K562 (cell line): ENCODE measurements at regions of chr12 and their contacts with region 1.

Region 1: DNA sequence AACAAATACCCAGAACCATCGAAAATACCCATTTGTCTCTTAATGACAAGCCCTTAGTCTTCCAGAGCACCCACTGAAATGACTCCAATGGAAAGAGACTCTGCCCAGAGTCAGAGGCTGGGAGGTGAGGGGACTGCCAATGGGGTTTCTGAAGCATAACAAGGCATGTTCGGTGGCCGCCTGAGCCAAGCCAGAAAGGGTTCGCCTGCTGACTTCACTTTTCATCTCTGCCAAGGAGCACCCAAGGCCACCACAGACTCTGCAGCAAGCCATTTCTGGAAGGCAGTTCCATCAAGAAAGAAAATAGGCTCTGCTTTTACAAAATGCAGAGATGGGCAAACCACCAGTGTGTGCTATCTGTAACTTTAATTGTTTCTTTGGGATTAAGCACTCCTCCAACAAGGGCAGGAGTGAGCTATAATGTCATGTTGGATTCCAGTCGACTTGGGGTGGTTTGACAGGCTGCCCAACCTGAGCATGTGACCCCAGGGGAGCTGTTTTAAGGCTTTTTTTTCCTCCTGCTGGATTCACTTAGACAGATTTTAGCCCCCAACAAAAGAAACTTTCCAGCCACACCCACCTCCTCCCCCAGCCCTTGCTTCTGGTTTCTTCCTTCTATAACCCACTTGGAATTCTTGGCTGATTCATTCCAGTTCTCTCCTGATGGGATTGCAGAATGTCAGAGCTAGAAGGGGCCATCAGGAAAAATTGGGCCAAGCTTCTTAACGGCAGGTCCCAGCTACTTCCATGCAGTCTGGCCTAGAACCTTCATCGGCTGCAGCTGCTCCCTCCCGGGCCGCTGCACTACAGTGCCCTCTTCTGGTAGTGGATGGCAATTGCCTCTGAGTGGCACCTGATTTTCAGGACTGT is 24.1 kb downstream of the CKAP4 start:
- DNase-seq: peak; percentile 73 to 84 (median 83)
- ATAC-seq: peak; percentile 96
- H3K4me3 ChIP-seq: no peak overlapping the region
- H3K27ac ChIP-seq: no peak overlapping the region
- H3K4me1 ChIP-seq: no peaks in the 10 kb centered on the region
- H3K27me3 ChIP-seq: peaks cover 5 to 8% of the 10 kb centered on the region in 2 experiments; a peak in 3 of 5 replicates
- CTCF ChIP-seq: peak; percentile 84 to 93 (median 85)
- EP300 ChIP-seq: no peak
- POLR2A ChIP-seq: no peak
- RAD21 ChIP-seq: peak; percentile 56 to 79

Region 2: GRCh38 chr12:105409801-105410471 is 813.8 kb before region 1 on chr12:
- CTCF ChIA-PET with region 1: no interaction called
- POLR2A ChIA-PET with region 1: no interaction called
- in situ Hi-C with region 1: loop called (anchors 10 kb)
- intact Hi-C with region 1: no loop called
- DNase-seq: no peak
- ATAC-seq: no peak
- H3K4me3 ChIP-seq: no peak overlapping the region
- H3K27ac ChIP-seq: no peak overlapping the region
- H3K4me1 ChIP-seq: no peaks in the 10 kb centered on the region
- H3K27me3 ChIP-seq: peaks cover 2 to 7% of the 10 kb centered on the region in 2 experiments; a peak in 1 of 5 replicates
- CTCF ChIP-seq: no peak
- EP300 ChIP-seq: no peak
- POLR2A ChIP-seq: no peak
- RAD21 ChIP-seq: no peak

Region 3: DNA sequence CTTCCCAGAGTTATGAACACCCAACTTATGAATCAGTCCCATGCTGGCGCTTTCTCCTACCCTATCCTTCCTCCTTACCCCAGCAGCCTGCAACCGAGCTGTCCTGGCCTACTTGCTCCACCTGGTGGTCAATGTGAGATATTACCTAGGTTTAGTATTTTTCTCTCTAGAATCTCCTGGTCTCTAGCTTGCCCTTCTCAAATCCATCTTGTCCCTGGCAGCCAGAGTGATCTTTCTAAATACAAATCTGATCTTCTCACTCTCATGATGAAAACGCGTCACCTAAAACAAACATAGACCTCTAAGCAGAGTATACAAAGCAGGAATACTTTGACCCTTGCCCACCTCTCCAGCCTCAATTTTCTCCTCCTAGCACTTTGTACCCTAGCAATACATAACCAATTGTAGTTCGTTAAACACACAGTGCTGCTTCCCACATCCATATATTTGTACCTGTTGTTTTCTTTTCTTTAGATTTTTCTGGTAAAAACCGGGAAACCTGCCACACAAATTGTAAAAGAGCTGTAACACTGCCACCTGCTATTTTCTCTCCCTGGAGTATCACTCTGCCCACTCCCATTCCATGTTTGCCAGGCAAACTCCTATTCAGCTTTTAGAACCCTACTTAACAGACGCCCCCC is 58.9 kb after region 1 on chr12:
- CTCF ChIA-PET with region 1: interaction called, 14 read pairs
- POLR2A ChIA-PET with region 1: interaction called, 7 read pairs
- in situ Hi-C with region 1: loop called (anchors 5 kb)
- intact Hi-C with region 1: loop called (anchors 1 kb)
- DNase-seq: peak; percentile 67 to 72 (median 71)
- ATAC-seq: peak; percentile 94
- H3K4me3 ChIP-seq: no peak overlapping the region
- H3K27ac ChIP-seq: no peak overlapping the region
- H3K4me1 ChIP-seq: 0 out of 5 replicates have a peak, but pooled peaks cover 0 to 3% of the 10 kb centered on the region in 2 experiments
- H3K27me3 ChIP-seq: peaks cover 0 to 18% of the 10 kb centered on the region in 2 experiments
- CTCF ChIP-seq: peak; percentile 77 to 82 (median 78)
- EP300 ChIP-seq: no peak
- POLR2A ChIP-seq: no peak
- RAD21 ChIP-seq: peak; percentile 71 to 79

Region 4: GRCh38 chr12:106357549-106358395 is 134.1 kb after region 1 on chr12 and contains the start of gene POLR3B:
- CTCF ChIA-PET with region 1: no interaction called
- POLR2A ChIA-PET with region 1: interaction called, 3 read pairs
- in situ Hi-C with region 1: loop called (anchors 5 kb)
- intact Hi-C with region 1: no loop called
- DNase-seq: peak; percentile 95 to 98 (median 96)
- ATAC-seq: peak; percentile 86
- H3K4me3 ChIP-seq: peak within 1 kb of the TSS; percentile 72
- H3K27ac ChIP-seq: peak within 1 kb of the TSS; percentile 94
- H3K4me1 ChIP-seq: peaks cover 14 to 15% of the 10 kb centered on the region in 2 experiments; a peak in 4 of 5 replicates
- H3K27me3 ChIP-seq: no peaks in the 10 kb centered on the region
- CTCF ChIP-seq: peak; percentile 79 to 92 (median 90)
- EP300 ChIP-seq: peak; percentile 30; the same call in 1 of the 2 replicates
- POLR2A ChIP-seq: peak; percentile 94
- RAD21 ChIP-seq: peak; percentile 81 to 82
- polyA plus RNA-seq, gene POLR3B: 7.6 to 16.5 TPM

Region 5: DNA sequence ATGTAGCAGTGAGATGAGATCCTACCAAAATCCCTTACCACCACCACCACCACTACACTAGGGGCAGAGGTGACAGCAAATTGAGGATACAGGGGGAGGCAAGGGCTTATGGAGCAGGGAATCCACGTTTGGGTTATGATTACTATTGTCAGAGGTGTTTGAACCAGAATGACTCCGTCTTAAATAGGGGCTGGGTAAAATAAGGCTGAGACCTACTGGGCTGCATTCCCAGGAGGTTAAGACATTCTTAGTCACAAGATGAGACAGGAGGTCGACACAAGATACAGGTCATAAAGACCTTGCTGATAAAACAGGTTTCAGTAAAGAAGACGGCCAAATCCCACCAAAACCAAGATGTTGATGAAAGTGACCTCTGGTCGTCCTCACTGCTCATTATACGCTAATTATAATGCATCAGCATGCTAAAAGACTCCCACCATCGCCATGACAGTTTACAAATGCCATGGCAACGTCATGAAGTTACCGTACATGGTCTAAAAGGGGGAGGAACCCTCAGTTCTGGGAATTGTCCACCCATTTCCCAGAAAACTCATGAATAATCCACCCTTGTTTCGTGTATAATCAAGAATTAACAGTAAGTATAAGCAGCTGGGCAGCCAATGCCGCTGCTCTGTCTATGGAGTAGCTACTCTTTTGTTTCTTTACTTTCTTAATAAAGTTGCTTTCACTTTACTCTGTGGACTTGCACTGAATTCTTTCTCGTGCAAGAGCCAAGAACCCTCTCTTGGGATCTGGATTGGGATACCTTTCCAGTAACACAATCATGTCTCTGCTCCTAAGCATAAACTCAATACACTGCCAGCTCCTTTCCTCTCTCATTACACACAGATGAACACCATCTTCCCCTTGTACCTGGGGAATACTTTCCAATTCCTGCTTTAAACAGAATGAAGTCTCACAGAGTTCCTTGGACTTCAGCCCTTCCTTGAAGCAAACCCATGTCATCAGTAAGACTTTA is 886.3 kb after region 1 on chr12:
- CTCF ChIA-PET with region 1: no interaction called
- POLR2A ChIA-PET with region 1: no interaction called
- in situ Hi-C with region 1: no loop called
- intact Hi-C with region 1: loop called (anchors 10 kb)
- DNase-seq: peak in 3 of 4 experiments; percentile 14 to 83 (median 36)
- ATAC-seq: peak; percentile 79
- H3K4me3 ChIP-seq: peak overlapping the region; percentile 2; the same call in 1 of the 2 replicates
- H3K27ac ChIP-seq: 0 out of 3 replicates have a peak overlapping the region, but pooled peaks have one; percentile 15
- H3K4me1 ChIP-seq: peaks cover 0 to 7% of the 10 kb centered on the region in 2 experiments; a peak in 2 of 5 replicates
- H3K27me3 ChIP-seq: no peaks in the 10 kb centered on the region; a peak in 1 of 5 replicates
- CTCF ChIP-seq: no peak
- EP300 ChIP-seq: 0 out of 2 replicates have a peak, but pooled peaks have one; percentile 8
- POLR2A ChIP-seq: no peak
- RAD21 ChIP-seq: no peak